Ascending aorta (tissue), 2 donors: ENCODE measurements at regions of chr13 and their contacts with region 1.

Region 1: GRCh38 chr13:110525328-110526319 is 35.9 kb downstream of the RAB20 start:
- DNase-seq: no peak
- H3K4me3 ChIP-seq: no peak overlapping the region
- H3K27ac ChIP-seq: peak overlapping the region; percentile 89 to 90
- H3K4me1 ChIP-seq: peaks cover 45 to 86% of the 10 kb centered on the region in 2 donors
- H3K27me3 ChIP-seq: no peaks in the 10 kb centered on the region
- CTCF ChIP-seq: no peak

Region 2: GRCh38 chr13:109904218-109904617 is 621.4 kb before region 1 on chr13:
- intact Hi-C with region 1: no loop called
- DNase-seq: no peak
- H3K4me3 ChIP-seq: no peak overlapping the region
- H3K27ac ChIP-seq: no peak overlapping the region
- H3K4me1 ChIP-seq: peaks cover 0 to 2% of the 10 kb centered on the region in 2 donors
- H3K27me3 ChIP-seq: no peaks in the 10 kb centered on the region
- CTCF ChIP-seq: no peak

Region 3: DNA sequence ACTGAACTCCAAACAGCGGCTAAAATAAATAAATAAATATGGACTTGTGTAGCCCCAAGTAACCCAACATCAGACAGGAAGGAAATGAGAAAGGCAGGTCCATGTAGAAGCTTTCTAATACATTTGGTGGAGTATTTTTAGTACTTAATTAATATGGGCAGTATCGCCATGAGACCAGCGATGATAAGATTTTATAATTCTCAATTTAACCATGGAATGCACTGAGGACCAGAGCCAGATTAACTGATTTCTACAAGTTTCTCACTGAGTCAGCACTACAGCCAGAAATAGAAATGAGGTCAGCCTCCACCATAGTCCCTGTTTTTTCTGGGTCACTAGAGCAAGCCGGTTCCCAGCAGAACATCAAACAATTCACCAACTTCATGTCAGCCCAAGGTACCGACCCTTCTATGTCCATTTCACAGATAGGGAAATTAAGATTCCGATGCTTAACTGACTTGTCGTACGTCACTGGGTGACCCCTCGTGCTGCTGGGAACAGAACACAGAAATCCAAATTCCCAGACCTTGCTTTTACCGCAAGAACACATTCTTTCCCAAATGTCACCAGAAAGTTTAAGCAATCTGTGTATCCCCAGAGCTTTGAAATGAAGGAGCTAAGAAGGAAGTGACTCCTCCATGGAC is 309.1 kb before region 1 on chr13:
- intact Hi-C with region 1: loop called (anchors 5 kb)
- DNase-seq: peak in 1 of 2 donors; percentile 84
- H3K4me3 ChIP-seq: peak overlapping the region in 1 of 2 donors; percentile 29
- H3K27ac ChIP-seq: peak overlapping the region; percentile 82 to 89
- H3K4me1 ChIP-seq: peaks cover 9 to 51% of the 10 kb centered on the region in 2 donors
- H3K27me3 ChIP-seq: no peaks in the 10 kb centered on the region
- CTCF ChIP-seq: no peak

Region 4: GRCh38 chr13:110541526-110541920 is 15.9 kb after region 1 on chr13:
- intact Hi-C with region 1: loop called (anchors 2 kb)
- DNase-seq: no peak
- H3K4me3 ChIP-seq: no peak overlapping the region
- H3K27ac ChIP-seq: peak overlapping the region; percentile 76 to 85
- H3K4me1 ChIP-seq: peaks cover 6 to 50% of the 10 kb centered on the region in 2 donors
- H3K27me3 ChIP-seq: no peaks in the 10 kb centered on the region
- CTCF ChIP-seq: no peak

Region 5: GRCh38 chr13:110615322-110616102 is 89.9 kb after region 1 on chr13 and contains the start of gene NAXD:
- intact Hi-C with region 1: loop called (anchors 5 kb)
- DNase-seq: peak; percentile 67 to 96
- H3K4me3 ChIP-seq: peak within 1 kb of the TSS; percentile 89 to 98
- H3K27ac ChIP-seq: peak within 1 kb of the TSS; percentile 95 to 96
- H3K4me1 ChIP-seq: peaks cover 6 to 21% of the 10 kb centered on the region in 2 donors
- H3K27me3 ChIP-seq: no peaks in the 10 kb centered on the region
- CTCF ChIP-seq: no peak
- total RNA-seq, gene NAXD: 1.9 TPM